SK-N-SH (cell line): ENCODE measurements at regions of chr6 and their contacts with region 1.

Region 1: GRCh38 chr6:83067448-83068413 is at the start of gene DOP1A:
- DNase-seq: peak; percentile 95
- H3K4me3 ChIP-seq: peak within 1 kb of the TSS; percentile 76 to 95
- H3K27ac ChIP-seq: peak within 1 kb of the TSS; percentile 45 to 64; a peak in 3 of 4 replicates
- H3K4me1 ChIP-seq: peaks cover 3 to 21% of the 10 kb centered on the region in 2 experiments
- H3K27me3 ChIP-seq: no peaks in the 10 kb centered on the region
- CTCF ChIP-seq: peak; percentile 98
- EP300 ChIP-seq: no peak; a peak in 1 of 4 replicates
- RAD21 ChIP-seq: peak; percentile 96
- polyA plus RNA-seq, gene DOP1A: 3.4 and 4.0 TPM in 2 replicates

Region 2: DNA sequence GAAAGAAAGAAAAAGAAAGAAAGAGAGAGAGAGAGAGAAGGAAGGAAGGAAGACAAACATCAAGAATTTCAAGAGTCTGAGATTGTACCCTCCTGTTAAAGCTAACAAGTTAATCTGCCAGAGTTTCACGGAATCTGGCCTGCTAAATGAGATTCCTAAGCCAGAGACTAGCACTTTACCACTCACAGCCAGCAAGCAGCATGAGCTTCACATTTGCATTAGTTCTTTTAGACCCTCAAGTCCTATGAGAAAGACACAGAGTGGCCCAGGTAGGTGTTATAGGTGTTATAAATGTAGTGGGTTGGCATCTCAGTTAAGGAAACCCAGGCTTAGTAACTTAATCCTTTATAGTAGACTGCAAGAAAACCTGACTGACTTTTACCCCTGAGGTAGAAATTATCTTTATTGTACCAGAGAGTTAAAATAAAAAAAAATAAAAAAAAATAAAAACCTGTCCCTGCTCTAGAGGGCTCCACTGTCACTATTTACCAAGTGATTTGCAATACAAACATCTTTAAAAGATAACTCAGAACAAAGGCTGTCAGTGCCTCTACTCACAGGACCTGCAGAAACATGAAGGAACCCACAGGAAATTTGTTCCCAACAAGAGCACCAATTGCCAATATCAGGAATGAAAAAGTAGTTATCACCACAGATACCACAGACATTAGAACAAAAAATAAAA is 810.5 kb before region 1 on chr6:
- CTCF ChIA-PET with region 1: interaction called, 21 read pairs
- POLR2A ChIA-PET with region 1: no interaction called
- DNase-seq: no peak
- H3K4me3 ChIP-seq: no peak overlapping the region
- H3K27ac ChIP-seq: no peak overlapping the region
- H3K4me1 ChIP-seq: peaks cover 11 to 22% of the 10 kb centered on the region in 2 experiments
- H3K27me3 ChIP-seq: no peaks in the 10 kb centered on the region
- CTCF ChIP-seq: peak; percentile 31
- EP300 ChIP-seq: no peak
- RAD21 ChIP-seq: peak; percentile 29

Region 3: GRCh38 chr6:83019741-83020140 is 48.0 kb before region 1 on chr6:
- CTCF ChIA-PET with region 1: no interaction called
- POLR2A ChIA-PET with region 1: no interaction called
- DNase-seq: no peak
- H3K4me3 ChIP-seq: no peak overlapping the region
- H3K27ac ChIP-seq: no peak overlapping the region
- H3K4me1 ChIP-seq: peaks cover 0 to 2% of the 10 kb centered on the region in 2 experiments; a peak in 1 of 4 replicates
- H3K27me3 ChIP-seq: no peaks in the 10 kb centered on the region
- CTCF ChIP-seq: no peak
- EP300 ChIP-seq: no peak
- RAD21 ChIP-seq: no peak

Region 4: DNA sequence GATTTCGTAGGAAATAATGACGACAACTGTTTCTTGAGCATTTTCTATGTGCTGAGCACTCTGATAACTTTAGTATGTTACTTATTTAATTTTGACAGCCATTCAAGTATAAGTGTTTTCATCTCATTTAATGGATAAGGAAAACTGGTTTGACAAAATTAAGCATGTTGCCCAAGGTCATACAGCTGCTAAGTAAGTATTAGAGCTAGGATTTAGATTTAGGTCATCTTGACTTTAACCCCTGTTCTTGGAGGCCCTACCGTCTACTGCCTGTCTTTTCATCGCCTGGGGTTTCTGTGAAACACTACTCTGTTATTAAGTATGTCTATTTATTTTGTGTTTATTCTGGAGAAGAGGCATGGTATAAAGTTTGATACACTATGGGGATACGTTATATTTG is 22.4 kb after region 1 on chr6:
- CTCF ChIA-PET with region 1: interaction called, 22 read pairs
- POLR2A ChIA-PET with region 1: no interaction called
- DNase-seq: no peak
- H3K4me3 ChIP-seq: no peak overlapping the region
- H3K27ac ChIP-seq: no peak overlapping the region
- H3K4me1 ChIP-seq: no peaks in the 10 kb centered on the region
- H3K27me3 ChIP-seq: no peaks in the 10 kb centered on the region
- CTCF ChIP-seq: no peak
- EP300 ChIP-seq: no peak
- RAD21 ChIP-seq: no peak

Region 5: DNA sequence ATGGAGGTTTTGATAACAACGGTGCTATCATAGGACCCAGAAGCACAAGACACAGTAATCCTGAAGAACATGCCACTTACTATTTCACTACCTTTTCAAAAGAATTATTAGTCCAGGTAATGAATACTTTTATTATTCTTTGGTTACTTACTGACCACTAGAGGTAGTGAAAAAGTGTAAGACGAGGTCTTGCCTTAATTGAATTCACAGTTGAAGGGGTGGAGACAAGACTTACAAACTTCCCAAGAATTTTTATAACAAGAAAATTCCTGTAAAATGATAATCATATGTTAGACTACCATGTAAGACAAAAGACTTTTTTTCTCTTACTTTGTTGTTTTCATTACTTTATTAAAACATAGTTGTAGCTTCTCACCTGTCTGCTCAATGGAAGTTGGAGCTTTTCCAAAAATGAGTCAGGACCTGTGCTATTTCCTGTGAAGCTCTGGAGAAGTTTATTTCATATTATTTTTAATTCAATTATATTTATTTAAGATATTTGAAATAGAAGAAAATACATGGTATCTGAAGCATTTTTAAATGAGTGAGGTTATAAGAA is 52.1 kb after region 1 on chr6:
- CTCF ChIA-PET with region 1: interaction called, 21 read pairs
- POLR2A ChIA-PET with region 1: no interaction called
- DNase-seq: no peak
- H3K4me3 ChIP-seq: no peak overlapping the region
- H3K27ac ChIP-seq: no peak overlapping the region
- H3K4me1 ChIP-seq: no peaks in the 10 kb centered on the region; a peak in 1 of 4 replicates
- H3K27me3 ChIP-seq: no peaks in the 10 kb centered on the region
- CTCF ChIP-seq: no peak
- EP300 ChIP-seq: no peak
- RAD21 ChIP-seq: no peak

Region 6: GRCh38 chr6:83192871-83193746 is 125.4 kb after region 1 on chr6 and contains the starts of genes PGM3 and RWDD2A:
- CTCF ChIA-PET with region 1: interaction called, 69 read pairs
- POLR2A ChIA-PET with region 1: interaction called, 13 read pairs
- DNase-seq: peak; percentile 98
- H3K4me3 ChIP-seq: peak within 1 kb of the TSS; percentile 90 to 95
- H3K27ac ChIP-seq: peak within 1 kb of the TSS; percentile 82 to 85
- H3K4me1 ChIP-seq: peaks cover 8 to 12% of the 10 kb centered on the region in 2 experiments; a peak in 3 of 4 replicates
- H3K27me3 ChIP-seq: no peaks in the 10 kb centered on the region
- CTCF ChIP-seq: no peak
- EP300 ChIP-seq: no peak
- RAD21 ChIP-seq: no peak
- polyA plus RNA-seq, gene PGM3: 24.2 and 30.2 TPM in 2 replicates
- polyA plus RNA-seq, gene RWDD2A: 3.4 and 5.8 TPM in 2 replicates

Region 7: GRCh38 chr6:83215131-83216047 is 147.7 kb after region 1 on chr6:
- CTCF ChIA-PET with region 1: interaction called, 328 read pairs
- POLR2A ChIA-PET with region 1: interaction called, 8 read pairs
- DNase-seq: peak; percentile 51
- H3K4me3 ChIP-seq: peak overlapping the region in 1 of 2 experiments; percentile 16; a peak in 1 of 4 replicates
- H3K27ac ChIP-seq: peak overlapping the region; percentile 64 to 72
- H3K4me1 ChIP-seq: peaks cover 6 to 9% of the 10 kb centered on the region in 2 experiments; a peak in 3 of 4 replicates
- H3K27me3 ChIP-seq: no peaks in the 10 kb centered on the region
- CTCF ChIP-seq: peak; percentile 95
- EP300 ChIP-seq: no peak
- RAD21 ChIP-seq: peak; percentile 88

Region 8: DNA sequence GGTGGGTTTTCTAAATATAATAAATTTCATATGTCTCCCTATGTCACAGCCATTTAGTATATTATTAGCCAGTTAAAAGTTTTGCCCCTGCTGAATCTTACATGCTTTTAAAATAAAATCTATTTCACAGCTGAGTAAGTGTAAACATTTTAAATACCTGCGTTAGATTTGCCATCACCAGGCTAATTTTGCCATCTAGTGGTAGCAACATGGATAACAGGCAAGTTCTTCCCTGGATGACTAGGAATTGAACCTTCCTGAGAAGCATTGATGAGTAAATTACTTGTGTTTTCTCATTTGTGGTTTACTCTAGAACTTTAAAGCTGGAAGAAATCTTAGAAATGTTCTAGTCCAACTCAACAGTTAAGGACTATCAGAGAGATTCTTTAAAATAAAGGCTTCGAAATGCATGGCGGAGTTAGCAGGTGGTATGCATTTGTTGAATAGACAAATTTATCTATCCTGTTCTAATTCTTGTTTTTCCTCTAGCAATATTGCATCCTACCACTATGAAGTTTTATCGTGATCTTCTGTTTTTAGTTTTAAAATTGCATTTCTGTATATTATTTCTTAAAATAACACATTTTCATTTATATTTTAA is 447.2 kb after region 1 on chr6:
- CTCF ChIA-PET with region 1: interaction called, 133 read pairs
- POLR2A ChIA-PET with region 1: no interaction called
- DNase-seq: peak; percentile 50
- H3K4me3 ChIP-seq: no peak overlapping the region; a peak in 1 of 4 replicates
- H3K27ac ChIP-seq: no peak overlapping the region
- H3K4me1 ChIP-seq: peaks cover 4 to 11% of the 10 kb centered on the region in 2 experiments; a peak in 2 of 4 replicates
- H3K27me3 ChIP-seq: no peaks in the 10 kb centered on the region
- CTCF ChIP-seq: peak; percentile 93
- EP300 ChIP-seq: no peak
- RAD21 ChIP-seq: peak; percentile 96